CD8-positive, alpha-beta T cell (primary cell): ENCODE measurements at regions of chr14 and their contacts with region 1.

Region 1: GRCh38 chr14:54881235-54881760 is 21.3 kb downstream of the GCH1 start:
- DNase-seq: peak in 6 of 9 experiments; percentile 15 to 68 (median 42)
- ATAC-seq: peak; percentile 69
- H3K4me3 ChIP-seq: peak overlapping the region; percentile 46 to 56
- H3K4me3 Mint-ChIP-seq: peak overlapping the region; percentile 86
- H3K27ac ChIP-seq: peak overlapping the region; percentile 62 to 85
- H3K27ac Mint-ChIP-seq: peak overlapping the region; percentile 91
- H3K4me1 ChIP-seq: peaks cover 11% of the 10 kb centered on the region
- H3K4me1 Mint-ChIP-seq: peaks cover 44% of the 10 kb centered on the region
- H3K27me3 ChIP-seq: no peaks in the 10 kb centered on the region
- H3K27me3 Mint-ChIP-seq: no peaks in the 10 kb centered on the region
- CTCF ChIP-seq: no peak

Region 2: DNA sequence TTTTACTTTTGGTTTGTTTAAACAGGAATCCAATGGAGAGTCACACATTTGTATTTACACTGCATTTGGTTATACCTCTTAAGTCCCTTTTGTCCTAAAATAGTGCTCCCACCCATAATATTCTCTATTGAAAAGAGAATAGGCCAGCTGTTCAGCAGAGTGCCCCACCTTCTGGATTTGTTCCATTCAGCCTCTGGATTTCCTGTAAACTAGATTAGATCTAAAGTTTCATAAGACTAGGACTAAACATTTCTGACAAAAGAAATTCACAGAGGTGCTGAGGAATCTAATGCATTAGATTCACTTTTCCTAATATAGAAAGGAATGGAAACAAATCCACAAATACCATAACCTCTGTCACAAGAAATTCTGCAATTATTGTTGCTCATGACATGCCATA is 16.8 kb before region 1 on chr14:
- CTCF ChIA-PET with region 1: interaction called, 8 read pairs
- POLR2A ChIA-PET with region 1: interaction called, 4 read pairs
- intact Hi-C with region 1: loop called in 1 of 2 experiments (anchors 2 kb)
- DNase-seq: no peak
- ATAC-seq: no peak
- H3K4me3 ChIP-seq: no peak overlapping the region
- H3K4me3 Mint-ChIP-seq: no peak overlapping the region
- H3K27ac ChIP-seq: no peak overlapping the region
- H3K27ac Mint-ChIP-seq: no peak overlapping the region
- H3K4me1 ChIP-seq: no peaks in the 10 kb centered on the region
- H3K4me1 Mint-ChIP-seq: peaks cover 14% of the 10 kb centered on the region
- H3K27me3 ChIP-seq: no peaks in the 10 kb centered on the region
- H3K27me3 Mint-ChIP-seq: no peaks in the 10 kb centered on the region
- CTCF ChIP-seq: no peak

Region 3: GRCh38 chr14:54893151-54893760 is 12.0 kb after region 1 on chr14:
- CTCF ChIA-PET with region 1: interaction called, 17 read pairs
- POLR2A ChIA-PET with region 1: interaction called, 8 read pairs
- intact Hi-C with region 1: loop called in 1 of 2 experiments (anchors 1 kb)
- DNase-seq: peak in 3 of 9 experiments; percentile 27 to 69 (median 63)
- ATAC-seq: peak; percentile 82
- H3K4me3 ChIP-seq: no peak overlapping the region
- H3K4me3 Mint-ChIP-seq: no peak overlapping the region
- H3K27ac ChIP-seq: no peak overlapping the region
- H3K27ac Mint-ChIP-seq: no peak overlapping the region
- H3K4me1 ChIP-seq: no peaks in the 10 kb centered on the region
- H3K4me1 Mint-ChIP-seq: peaks cover 52% of the 10 kb centered on the region
- H3K27me3 ChIP-seq: no peaks in the 10 kb centered on the region
- H3K27me3 Mint-ChIP-seq: no peaks in the 10 kb centered on the region
- CTCF ChIP-seq: peak; percentile 79

Region 4: DNA sequence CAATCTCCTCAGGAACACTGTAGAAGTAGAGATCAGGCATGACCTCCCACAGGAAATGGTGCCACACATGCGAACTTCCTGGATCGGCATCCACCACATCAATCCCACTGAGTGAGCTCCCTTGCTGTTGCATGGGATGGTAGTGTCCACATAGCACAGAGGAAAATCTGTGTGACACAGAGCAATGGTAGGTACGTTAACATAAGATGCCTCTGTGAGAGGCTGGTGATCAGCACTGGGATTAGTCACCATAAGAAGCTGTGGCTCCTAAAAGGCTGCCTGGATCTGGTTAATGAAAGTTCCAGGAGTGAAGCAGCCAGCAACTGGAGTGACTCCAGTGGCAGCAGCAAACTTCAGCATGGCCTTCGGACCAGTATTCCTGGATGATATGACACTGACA is 123.8 kb after region 1 on chr14:
- CTCF ChIA-PET with region 1: no interaction called
- POLR2A ChIA-PET with region 1: no interaction called
- intact Hi-C with region 1: no loop called
- DNase-seq: no peak
- ATAC-seq: no peak
- H3K4me3 ChIP-seq: no peak overlapping the region
- H3K4me3 Mint-ChIP-seq: no peak overlapping the region
- H3K27ac ChIP-seq: no peak overlapping the region
- H3K27ac Mint-ChIP-seq: no peak overlapping the region
- H3K4me1 ChIP-seq: no peaks in the 10 kb centered on the region
- H3K4me1 Mint-ChIP-seq: peaks cover 4% of the 10 kb centered on the region
- H3K27me3 ChIP-seq: no peaks in the 10 kb centered on the region
- H3K27me3 Mint-ChIP-seq: no peaks in the 10 kb centered on the region
- CTCF ChIP-seq: no peak